ENCODE measurements at regions of chr2 and their contacts with region 1.

Region 1: DNA sequence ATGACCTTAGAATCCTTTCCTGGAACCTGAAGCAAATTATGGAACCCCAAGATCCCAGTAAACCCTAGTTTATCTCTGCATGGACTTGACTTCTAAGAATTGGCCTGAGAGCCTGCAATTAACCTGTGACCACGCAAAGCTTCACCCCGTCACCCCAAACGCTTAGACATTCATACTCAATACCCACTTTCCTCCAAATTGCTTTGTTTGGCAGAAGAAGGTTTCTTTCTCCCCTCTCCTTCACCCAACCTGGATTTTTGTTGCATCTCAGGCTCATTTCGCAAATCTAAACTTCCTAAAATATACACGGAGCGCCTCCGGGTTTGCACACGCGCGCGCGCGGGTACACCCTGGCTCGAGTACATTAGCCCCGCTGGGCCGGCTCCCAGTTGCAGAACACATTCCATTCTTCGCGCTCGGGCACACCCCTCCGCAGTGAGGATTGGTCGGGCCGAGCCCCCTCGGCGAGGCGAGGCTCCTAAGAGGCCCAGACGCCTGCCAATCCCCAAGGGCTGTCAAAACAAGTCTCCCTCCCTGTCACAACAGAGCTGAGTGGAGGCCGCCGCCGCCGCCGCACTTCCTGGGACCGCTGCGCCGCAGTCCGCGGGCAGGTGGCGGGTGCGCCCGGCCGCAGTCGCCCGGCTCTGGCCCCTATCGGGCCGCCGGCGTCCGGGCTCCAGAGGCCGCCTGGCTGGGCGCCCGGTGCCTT is at the start of gene PLCL1:
- DNase-seq: peak; percentile 85 to 93 (median 90)
- ATAC-seq: peak; percentile 96 to 98 (median 98)
- H3K4me3 ChIP-seq: peak within 1 kb of the TSS; percentile 49 to 75 (median 70)
- H3K27ac ChIP-seq: peak within 1 kb of the TSS in 1 of 4 donors; percentile 27
- H3K4me1 ChIP-seq: peaks cover 0 to 5% (median 4%) of the 10 kb centered on the region in 3 donors
- H3K27me3 ChIP-seq: no peaks in the 10 kb centered on the region
- CTCF ChIP-seq: no peak
- total RNA-seq, gene PLCL1: 0.41 to 1.5 (median 0.76) TPM

Region 2: DNA sequence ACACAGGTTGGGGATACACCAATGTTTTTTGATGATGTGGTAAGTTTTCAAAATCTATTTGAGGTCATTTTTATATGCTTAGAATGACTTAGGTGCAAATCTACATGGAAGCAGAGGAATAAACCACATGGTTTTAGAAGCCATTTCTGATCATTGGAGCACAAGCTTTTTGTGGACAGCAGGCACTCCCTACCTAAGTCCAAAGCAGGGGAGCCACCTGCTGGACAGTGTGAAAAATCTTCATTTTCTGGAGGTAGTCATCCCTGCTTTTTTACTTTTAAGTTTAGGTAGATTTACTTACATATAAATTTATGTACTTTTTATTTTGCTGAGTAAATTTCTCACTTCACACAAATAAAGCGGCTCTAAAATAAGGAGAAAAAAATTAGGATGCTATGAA is 323.4 kb after region 1 on chr2:
- intact Hi-C with region 1: loop called in 1 of 3 experiments (anchors 5 kb)
- DNase-seq: peak in 4 of 6 donors; percentile 16 to 29 (median 23)
- ATAC-seq: peak in 3 of 4 donors; percentile 79 to 84 (median 83)
- H3K4me3 ChIP-seq: no peak overlapping the region
- H3K27ac ChIP-seq: no peak overlapping the region
- H3K4me1 ChIP-seq: no peaks in the 10 kb centered on the region
- H3K27me3 ChIP-seq: no peaks in the 10 kb centered on the region
- CTCF ChIP-seq: peak in 3 of 4 donors; percentile 33 to 40 (median 34)

Region 3: GRCh38 chr2:198296665-198297308 is 492.6 kb after region 1 on chr2:
- intact Hi-C with region 1: loop called in 2 of 3 experiments (anchors 5 kb)
- DNase-seq: peak in 3 of 6 donors; percentile 11 to 56 (median 28)
- ATAC-seq: peak; percentile 70 to 89 (median 85)
- H3K4me3 ChIP-seq: no peak overlapping the region
- H3K27ac ChIP-seq: no peak overlapping the region
- H3K4me1 ChIP-seq: no peaks in the 10 kb centered on the region
- H3K27me3 ChIP-seq: peaks cover 0 to 9% (median 0%) of the 10 kb centered on the region in 4 donors
- CTCF ChIP-seq: peak; percentile 55 to 83 (median 80)